ENCODE measurements at regions of chr6 and their contacts with region 1.

Region 1: GRCh38 chr6:142946181-142946923 is 1.4 kb upstream of the HIVEP2 start:
- DNase-seq: peak; percentile 97
- H3K4me3 ChIP-seq: peak overlapping the region; percentile 58 to 91 (median 85)
- H3K27ac ChIP-seq: peak overlapping the region; percentile 85
- H3K4me1 ChIP-seq: peaks cover 17% of the 10 kb centered on the region
- H3K27me3 ChIP-seq: no peaks in the 10 kb centered on the region
- CTCF ChIP-seq: no peak
- POLR2A ChIP-seq: no peak

Region 2: GRCh38 chr6:142474531-142475289 is 471.6 kb before region 1 on chr6:
- CTCF ChIA-PET with region 1: no interaction called
- POLR2A ChIA-PET with region 1: no interaction called
- dilution Hi-C with region 1: no loop called
- intact Hi-C with region 1: loop called (anchors 10 kb)
- DNase-seq: peak; percentile 71
- H3K4me3 ChIP-seq: no peak overlapping the region
- H3K27ac ChIP-seq: peak overlapping the region; percentile 1
- H3K4me1 ChIP-seq: peaks cover 2% of the 10 kb centered on the region
- H3K27me3 ChIP-seq: peaks cover 0 to 2% of the 10 kb centered on the region in 2 experiments
- CTCF ChIP-seq: peak; percentile 41 to 43
- POLR2A ChIP-seq: no peak

Region 3: GRCh38 chr6:142746524-142746923 is 199.8 kb before region 1 on chr6:
- CTCF ChIA-PET with region 1: interaction called, 10 read pairs
- POLR2A ChIA-PET with region 1: no interaction called
- dilution Hi-C with region 1: no loop called
- intact Hi-C with region 1: loop called (anchors 5 kb)
- DNase-seq: peak; percentile 55
- H3K4me3 ChIP-seq: no peak overlapping the region
- H3K27ac ChIP-seq: no peak overlapping the region
- H3K4me1 ChIP-seq: no peaks in the 10 kb centered on the region
- H3K27me3 ChIP-seq: no peaks in the 10 kb centered on the region
- CTCF ChIP-seq: peak; percentile 46 to 50
- POLR2A ChIP-seq: no peak

Region 4: GRCh38 chr6:142845624-142846458 is 100.5 kb before region 1 on chr6:
- CTCF ChIA-PET with region 1: interaction called, 4 read pairs
- POLR2A ChIA-PET with region 1: no interaction called
- dilution Hi-C with region 1: no loop called
- intact Hi-C with region 1: loop called (anchors 1 kb)
- DNase-seq: peak; percentile 97
- H3K4me3 ChIP-seq: no peak overlapping the region
- H3K27ac ChIP-seq: peak overlapping the region; percentile 76
- H3K4me1 ChIP-seq: peaks cover 64% of the 10 kb centered on the region
- H3K27me3 ChIP-seq: no peaks in the 10 kb centered on the region
- CTCF ChIP-seq: no peak
- POLR2A ChIP-seq: no peak

Region 5: DNA sequence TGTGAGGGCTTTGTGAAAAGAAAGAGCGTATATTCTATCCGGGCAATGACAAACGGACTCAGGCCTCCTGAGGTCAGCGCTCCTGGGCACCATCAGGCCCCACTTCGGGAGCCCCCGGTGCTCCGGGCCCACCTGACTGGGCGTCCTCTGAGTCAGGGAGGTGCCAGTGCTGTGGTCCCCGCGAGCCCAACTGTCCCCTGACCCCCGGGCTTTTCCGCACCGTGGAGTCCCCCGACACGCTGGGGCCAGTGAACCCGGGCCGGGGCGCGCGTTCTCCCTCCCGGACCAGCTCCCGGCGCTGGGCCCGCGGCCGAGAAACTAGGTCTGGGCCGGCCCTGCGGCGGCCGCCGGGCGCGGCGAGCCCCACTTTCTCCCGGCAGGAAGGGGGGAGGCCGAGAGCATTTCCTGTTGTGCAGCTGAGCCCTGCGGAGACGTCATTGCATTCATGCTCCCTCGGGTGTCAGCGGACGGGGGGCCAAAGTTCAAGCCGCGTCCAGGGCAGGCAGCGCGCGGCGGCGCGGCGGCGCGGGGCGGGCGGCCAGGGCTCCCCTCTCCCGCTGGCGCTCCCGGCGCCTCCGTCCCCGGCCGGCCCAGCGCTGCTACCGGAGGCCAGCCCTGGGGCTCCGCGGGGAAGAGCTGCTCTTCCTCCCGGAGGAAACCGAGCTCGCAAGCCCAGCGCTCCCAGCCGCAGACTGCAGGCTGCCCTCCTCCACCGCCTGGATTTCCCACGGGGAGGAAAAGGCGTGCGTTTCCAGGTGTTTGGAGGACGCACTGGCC is 19.7 kb before region 1 on chr6:
- CTCF ChIA-PET with region 1: interaction called, 13 read pairs
- POLR2A ChIA-PET with region 1: no interaction called
- dilution Hi-C with region 1: no loop called
- intact Hi-C with region 1: loop called (anchors 1 kb)
- DNase-seq: peak; percentile 82
- H3K4me3 ChIP-seq: peak overlapping the region; percentile 47 to 76 (median 60)
- H3K27ac ChIP-seq: peak overlapping the region; percentile 79
- H3K4me1 ChIP-seq: peaks cover 16% of the 10 kb centered on the region
- H3K27me3 ChIP-seq: no peaks in the 10 kb centered on the region
- CTCF ChIP-seq: no peak
- POLR2A ChIP-seq: peak; percentile 34

Region 6: GRCh38 chr6:143427109-143427817 is 480.9 kb after region 1 on chr6:
- CTCF ChIA-PET with region 1: interaction called, 5 read pairs
- POLR2A ChIA-PET with region 1: no interaction called
- dilution Hi-C with region 1: no loop called
- intact Hi-C with region 1: loop called (anchors 1 kb)
- DNase-seq: peak; percentile 66
- H3K4me3 ChIP-seq: no peak overlapping the region
- H3K27ac ChIP-seq: no peak overlapping the region
- H3K4me1 ChIP-seq: no peaks in the 10 kb centered on the region
- H3K27me3 ChIP-seq: no peaks in the 10 kb centered on the region
- CTCF ChIP-seq: peak; percentile 93 to 96
- POLR2A ChIP-seq: no peak

Measured in endothelial cell of umbilical vein (primary cell).